Left colon (tissue), 2 donors: ENCODE measurements at regions of chr13 and their contacts with region 1.

Region 1: GRCh38 chr13:45696610-45697226 is 5.4 kb upstream of the CBY2 start:
- DNase-seq: no peak
- ATAC-seq: no peak

Region 2: GRCh38 chr13:45728759-45729158 is 32.0 kb after region 1 on chr13:
- intact Hi-C with region 1: loop called in 1 of 2 experiments (anchors 2 kb)
- DNase-seq: no peak
- ATAC-seq: no peak